Colonic mucosa (tissue), 4 donors: ENCODE measurements at regions of chr17 and their contacts with region 1.

Region 1: GRCh38 chr17:49997791-49998703 is 3.0 kb upstream of the DLX3 start:
- DNase-seq: peak; percentile 87
- H3K4me3 ChIP-seq: no peak overlapping the region
- H3K27ac ChIP-seq: no peak overlapping the region
- H3K4me1 ChIP-seq: peaks cover 11% of the 10 kb centered on the region
- H3K27me3 ChIP-seq: peaks cover 61% of the 10 kb centered on the region
- CTCF ChIP-seq: peak; percentile 98

Region 2: DNA sequence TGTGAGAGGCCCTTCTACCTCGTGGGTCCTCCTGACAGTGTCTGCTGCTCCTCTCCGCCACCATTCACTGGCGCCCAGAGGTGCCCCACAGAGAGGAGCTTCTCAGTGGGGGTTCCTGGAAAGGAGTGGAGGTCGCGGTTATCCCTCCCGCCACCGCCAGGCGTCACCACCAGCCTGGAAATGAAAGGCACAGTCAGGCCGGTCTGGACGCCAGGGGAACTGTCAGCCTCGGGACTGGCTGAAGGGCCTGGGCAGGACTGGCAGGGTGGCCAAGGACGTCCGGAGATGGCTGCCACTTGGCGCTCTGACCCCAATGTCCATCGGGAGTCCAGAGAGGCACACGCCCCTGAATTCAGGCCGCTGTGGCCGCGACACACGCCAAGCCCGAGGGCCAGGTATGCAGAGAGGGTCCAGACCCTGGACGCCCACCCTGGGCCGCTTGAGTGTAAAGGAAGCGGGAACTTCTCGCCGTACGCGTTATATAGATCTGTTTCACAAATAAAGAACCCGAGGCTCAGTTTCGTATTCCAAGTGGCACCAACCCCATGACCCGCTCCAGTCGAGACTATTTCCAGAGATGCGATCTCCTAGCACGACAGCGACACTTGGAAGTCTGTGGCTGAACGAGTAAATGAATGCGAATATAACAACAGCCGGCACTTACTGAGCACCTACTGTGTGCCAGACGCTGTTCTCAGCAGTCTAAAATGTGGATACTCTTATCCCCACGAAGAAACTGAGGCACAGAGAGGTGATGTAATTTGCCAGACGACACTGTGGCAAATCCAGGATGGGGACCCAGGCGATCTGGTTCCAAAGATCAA is 430.0 kb before region 1 on chr17:
- intact Hi-C with region 1: loop called (anchors 5 kb)
- DNase-seq: peak; percentile 90
- H3K4me3 ChIP-seq: peak overlapping the region; percentile 29
- H3K27ac ChIP-seq: no peak overlapping the region
- H3K4me1 ChIP-seq: peaks cover 3% of the 10 kb centered on the region
- H3K27me3 ChIP-seq: no peaks in the 10 kb centered on the region
- CTCF ChIP-seq: peak; percentile 96

Region 3: GRCh38 chr17:49861150-49861892 is 136.7 kb before region 1 on chr17:
- intact Hi-C with region 1: loop called (anchors 2 kb)
- DNase-seq: no peak
- H3K4me3 ChIP-seq: no peak overlapping the region
- H3K27ac ChIP-seq: no peak overlapping the region
- H3K4me1 ChIP-seq: no peaks in the 10 kb centered on the region
- H3K27me3 ChIP-seq: no peaks in the 10 kb centered on the region
- CTCF ChIP-seq: peak; percentile 81

Region 4: GRCh38 chr17:49880291-49881053 is 117.6 kb before region 1 on chr17:
- intact Hi-C with region 1: loop called (anchors 5 kb)
- DNase-seq: peak; percentile 57
- H3K4me3 ChIP-seq: no peak overlapping the region
- H3K27ac ChIP-seq: no peak overlapping the region
- H3K4me1 ChIP-seq: peaks cover 6% of the 10 kb centered on the region
- H3K27me3 ChIP-seq: peaks cover 7% of the 10 kb centered on the region
- CTCF ChIP-seq: peak; percentile 97

Region 5: DNA sequence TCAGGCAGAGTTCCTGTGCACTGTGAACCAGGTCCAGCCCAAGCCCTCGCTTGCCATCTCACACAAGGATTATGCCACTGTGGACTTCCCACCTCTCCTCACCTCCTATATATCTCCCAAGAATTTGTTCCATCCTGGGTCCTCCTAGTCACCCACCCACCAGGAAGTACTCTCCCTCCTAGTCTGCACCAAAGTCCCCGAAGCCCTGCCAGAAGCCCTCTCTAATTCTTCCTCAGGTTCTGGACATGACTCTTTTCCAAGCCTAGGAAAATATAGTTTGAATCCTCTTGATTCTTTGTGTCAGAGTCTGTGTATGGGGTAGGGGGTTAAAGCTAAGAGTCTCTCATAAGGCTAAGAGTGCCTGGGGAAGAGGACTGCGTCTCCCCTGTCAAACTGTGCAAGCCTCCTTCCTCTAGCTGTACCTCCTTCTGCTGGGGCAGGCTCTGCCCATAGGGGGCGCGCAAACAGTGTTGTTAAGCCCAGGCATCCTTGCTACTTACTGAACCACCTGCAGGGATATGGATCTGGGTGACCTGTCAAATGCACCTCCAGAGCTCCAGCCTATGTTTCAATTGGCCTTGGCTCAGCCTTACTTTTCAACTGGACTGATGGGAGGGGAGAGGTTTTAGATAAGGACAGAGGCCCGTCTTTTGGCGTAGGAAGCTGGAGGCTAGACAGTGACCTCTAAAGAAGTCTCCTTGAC is 45.7 kb before region 1 on chr17:
- intact Hi-C with region 1: loop called (anchors 2 kb)
- DNase-seq: peak; percentile 85
- H3K4me3 ChIP-seq: no peak overlapping the region
- H3K27ac ChIP-seq: no peak overlapping the region
- H3K4me1 ChIP-seq: no peaks in the 10 kb centered on the region
- H3K27me3 ChIP-seq: peaks cover 11% of the 10 kb centered on the region
- CTCF ChIP-seq: peak; percentile 82

Region 6: GRCh38 chr17:49963626-49964302 is 34.3 kb before region 1 on chr17:
- intact Hi-C with region 1: no loop called
- DNase-seq: no peak
- H3K4me3 ChIP-seq: no peak overlapping the region
- H3K27ac ChIP-seq: no peak overlapping the region
- H3K4me1 ChIP-seq: peaks cover 4% of the 10 kb centered on the region
- H3K27me3 ChIP-seq: peaks cover 58% of the 10 kb centered on the region
- CTCF ChIP-seq: no peak